Gastrocnemius medialis (tissue), 4 donors: ENCODE measurements at regions of chr3 and their contacts with region 1.

Region 1: GRCh38 chr3:23840521-23840920 is 34.8 kb downstream of the UBE2E1 start:
- DNase-seq: no peak
- ATAC-seq: no peak
- H3K4me3 ChIP-seq: no peak overlapping the region
- H3K27ac ChIP-seq: no peak overlapping the region
- H3K4me1 ChIP-seq: peaks cover 25 to 39% of the 10 kb centered on the region in 2 donors
- H3K27me3 ChIP-seq: no peaks in the 10 kb centered on the region
- CTCF ChIP-seq: no peak
- POLR2A ChIP-seq: no peak

Region 2: GRCh38 chr3:23877329-23877980 is 36.9 kb after region 1 on chr3:
- in situ Hi-C with region 1: no loop called
- intact Hi-C with region 1: loop called (anchors 5 kb)
- DNase-seq: peak in 1 of 2 donors; percentile 33
- ATAC-seq: peak in 1 of 2 donors; percentile 9
- H3K4me3 ChIP-seq: no peak overlapping the region
- H3K27ac ChIP-seq: no peak overlapping the region
- H3K4me1 ChIP-seq: peaks cover 56% of the 10 kb centered on the region in 2 donors
- H3K27me3 ChIP-seq: no peaks in the 10 kb centered on the region
- CTCF ChIP-seq: no peak
- POLR2A ChIP-seq: no peak